ENCODE measurements at regions of chr2 and their contacts with region 1.

Region 1: DNA sequence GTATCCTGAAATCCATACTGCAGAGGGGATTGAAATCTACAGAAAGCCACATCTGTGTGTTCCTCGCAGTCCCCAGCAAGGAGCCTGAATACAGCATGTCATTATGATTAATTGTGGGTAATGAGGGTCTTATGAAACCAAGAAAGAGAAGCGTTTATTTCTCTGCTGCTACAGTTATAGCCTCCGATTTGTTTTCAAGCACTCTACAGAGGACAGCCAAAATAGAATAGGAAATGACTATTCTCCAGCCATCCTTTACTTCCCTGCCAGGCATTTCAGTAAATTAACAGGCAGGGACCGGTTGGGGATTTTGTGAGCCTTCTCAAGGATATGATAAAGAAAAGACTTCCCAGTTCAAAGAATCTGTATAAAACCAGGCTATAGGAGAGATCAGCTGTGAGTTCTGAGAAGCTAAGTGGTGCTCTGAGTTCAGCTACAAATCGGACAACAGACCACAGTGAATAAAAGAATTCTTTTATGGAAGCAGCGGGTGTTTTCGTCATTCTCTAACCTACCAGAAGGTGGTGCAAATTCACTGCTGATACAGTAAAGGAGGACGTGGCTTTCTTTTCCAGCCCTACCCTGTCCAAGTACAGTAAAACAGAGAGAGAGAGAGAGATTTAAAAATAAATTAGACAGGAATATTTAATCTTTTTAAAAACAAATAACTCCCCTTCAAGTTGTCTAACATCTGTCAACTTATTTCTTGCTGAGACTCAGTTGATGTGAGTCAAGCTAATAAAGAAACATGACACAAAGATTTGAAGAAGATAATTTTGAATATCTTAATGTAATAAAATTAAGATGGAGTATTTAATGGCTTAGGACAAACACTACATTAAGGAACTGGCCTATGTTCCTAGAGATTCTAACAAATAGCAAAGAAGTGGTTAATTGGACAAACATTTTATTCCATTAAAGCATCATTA is 133.7 kb downstream of the INSIG2 start:
- DNase-seq: peak; percentile 58
- H3K4me3 Mint-ChIP-seq: no peak overlapping the region
- H3K27ac Mint-ChIP-seq: no peak overlapping the region
- H3K4me1 Mint-ChIP-seq: peaks cover 29% of the 10 kb centered on the region
- H3K27me3 Mint-ChIP-seq: peaks cover 73% of the 10 kb centered on the region

Region 2: GRCh38 chr2:117888897-117889296 is 333.0 kb before region 1 on chr2:
- CTCF ChIA-PET with region 1: no interaction called
- POLR2A ChIA-PET with region 1: no interaction called
- DNase-seq: no peak
- H3K4me3 Mint-ChIP-seq: no peak overlapping the region
- H3K27ac Mint-ChIP-seq: no peak overlapping the region
- H3K4me1 Mint-ChIP-seq: no peaks in the 10 kb centered on the region
- H3K27me3 Mint-ChIP-seq: peaks cover 5% of the 10 kb centered on the region

Region 3: GRCh38 chr2:118003396-118003824 is 218.5 kb before region 1 on chr2:
- CTCF ChIA-PET with region 1: no interaction called
- POLR2A ChIA-PET with region 1: no interaction called
- DNase-seq: peak; percentile 78
- H3K4me3 Mint-ChIP-seq: no peak overlapping the region
- H3K27ac Mint-ChIP-seq: no peak overlapping the region
- H3K4me1 Mint-ChIP-seq: peaks cover 16% of the 10 kb centered on the region
- H3K27me3 Mint-ChIP-seq: no peaks in the 10 kb centered on the region

Region 4: DNA sequence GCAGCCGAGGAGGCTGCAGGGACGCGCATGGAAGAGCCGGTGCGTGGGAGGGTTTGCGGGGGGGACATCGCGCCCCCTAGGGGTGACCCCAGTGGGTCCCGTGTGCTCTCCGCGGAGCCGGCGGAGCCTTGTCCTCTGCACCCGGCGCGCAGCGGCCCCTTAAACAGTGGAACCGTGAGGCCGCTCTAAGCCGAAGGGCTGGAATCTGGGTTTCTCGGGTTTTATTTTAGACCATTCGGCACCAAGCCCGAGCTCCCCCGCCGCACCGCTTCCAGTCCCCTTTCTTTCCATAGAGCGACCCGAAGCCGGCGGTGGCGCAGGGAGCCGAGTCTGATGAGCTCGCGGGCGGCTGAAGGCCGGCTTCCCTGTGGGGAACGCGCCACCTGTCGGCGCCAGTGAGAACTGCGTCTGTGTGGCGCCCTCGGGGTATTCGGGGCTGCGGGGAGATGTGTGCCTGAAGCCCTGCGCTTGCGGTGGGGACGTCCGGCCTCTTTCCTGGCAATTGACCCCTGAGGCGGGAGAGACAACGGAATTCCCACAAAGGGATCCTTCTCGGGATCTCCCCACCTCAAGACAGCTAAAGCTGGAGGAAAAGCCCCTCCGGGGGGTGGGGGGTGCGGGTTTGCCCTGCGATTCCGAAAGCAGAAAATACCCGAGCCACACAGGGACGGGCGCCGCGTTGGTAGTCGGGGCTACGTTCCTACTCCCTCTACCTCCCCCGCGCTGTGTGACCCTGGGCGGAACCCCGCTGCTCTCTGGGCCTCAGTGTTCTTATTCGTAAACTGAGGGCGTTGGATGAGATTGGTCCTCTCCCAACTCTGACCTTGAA is 633.7 kb after region 1 on chr2:
- CTCF ChIA-PET with region 1: interaction called, 11 read pairs
- POLR2A ChIA-PET with region 1: no interaction called
- DNase-seq: peak; percentile 78
- H3K4me3 Mint-ChIP-seq: peak overlapping the region; percentile 52
- H3K27ac Mint-ChIP-seq: peak overlapping the region; percentile 19
- H3K4me1 Mint-ChIP-seq: peaks cover 14% of the 10 kb centered on the region
- H3K27me3 Mint-ChIP-seq: peaks cover 84% of the 10 kb centered on the region

Measured in activated CD4-positive, alpha-beta T cell treated with anti-CD3 and anti-CD28 coated beads, Interleukin-2, amount 10 ng/mL, durations not matched to agents 7 days and 5 days (primary cell).